ENCODE measurements at regions of chrX and their contacts with region 1.

Region 1: DNA sequence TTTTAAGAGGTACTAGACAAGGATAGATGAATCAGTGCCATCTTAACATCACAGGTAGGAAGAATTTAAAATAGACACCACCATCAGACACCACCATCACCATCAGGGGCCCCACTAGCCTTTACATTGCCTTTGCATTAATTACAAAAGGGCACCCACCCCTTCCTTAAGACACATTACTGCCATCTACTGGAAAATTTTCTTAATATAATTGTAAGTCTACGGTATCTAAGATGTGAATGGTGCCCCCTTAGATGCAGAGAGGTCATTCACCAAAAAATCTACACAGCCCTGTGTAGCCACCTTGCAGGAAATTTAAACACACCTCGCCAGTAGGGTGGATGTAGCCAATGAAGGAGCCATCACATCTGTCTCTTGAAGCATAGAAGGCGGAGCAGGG is 184.1 kb downstream of the MID1IP1 start:
- DNase-seq: no peak
- ATAC-seq: peak in 2 of 4 donors; percentile 59 to 60
- H3K4me3 ChIP-seq: no peak overlapping the region
- H3K27ac ChIP-seq: no peak overlapping the region
- H3K4me1 ChIP-seq: no peaks in the 10 kb centered on the region
- H3K27me3 ChIP-seq: peaks cover 0 to 5% (median 0%) of the 10 kb centered on the region in 3 donors
- CTCF ChIP-seq: peak; percentile 21

Region 2: GRCh38 chrX:38774249-38774648 is 211.1 kb before region 1 on chrX:
- intact Hi-C with region 1: loop called in 1 of 2 experiments (anchors 10 kb)
- DNase-seq: no peak
- ATAC-seq: no peak
- H3K4me3 ChIP-seq: no peak overlapping the region
- H3K27ac ChIP-seq: no peak overlapping the region
- H3K4me1 ChIP-seq: no peaks in the 10 kb centered on the region
- H3K27me3 ChIP-seq: no peaks in the 10 kb centered on the region
- CTCF ChIP-seq: no peak